ENCODE measurements at regions of chr15 and their contacts with region 1.

Region 1: DNA sequence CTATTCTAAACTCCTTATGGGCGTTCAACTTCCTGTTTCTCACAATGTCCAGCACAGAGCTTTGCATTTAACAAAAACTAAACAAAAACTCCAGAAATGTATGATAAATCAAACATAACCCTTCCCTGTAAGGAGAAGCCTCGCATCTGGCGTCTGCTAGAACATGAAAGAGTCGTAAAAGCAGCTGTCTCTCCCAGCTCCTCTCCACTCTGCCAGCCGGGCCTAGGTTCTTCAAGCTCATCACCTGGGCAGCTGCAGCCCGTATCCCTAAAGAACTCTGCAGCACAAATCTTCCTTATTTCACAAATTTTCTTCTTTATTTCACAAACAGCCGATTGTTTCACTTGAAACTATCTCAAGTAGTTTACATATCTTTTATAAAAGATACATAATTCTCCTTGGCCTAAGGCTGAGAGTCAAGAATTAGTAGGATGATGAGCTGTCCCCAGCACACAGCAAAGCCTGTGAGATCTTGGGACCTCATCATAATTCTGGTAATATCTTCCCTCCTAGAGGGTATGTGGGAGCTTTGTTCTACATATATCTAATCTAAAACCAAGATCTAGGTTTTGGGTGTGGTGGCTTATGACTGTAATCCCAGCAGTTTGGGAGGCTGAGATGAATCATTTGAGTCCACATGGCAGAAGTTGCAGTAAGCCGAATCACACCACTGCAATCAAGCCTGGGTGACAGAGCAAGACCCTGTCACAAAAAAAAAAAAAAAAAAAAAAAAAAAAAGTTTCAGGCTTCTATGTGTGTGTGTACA is 35.3 kb downstream of the ANXA2 start:
- DNase-seq: no peak
- ATAC-seq: no peak
- H3K4me3 ChIP-seq: no peak overlapping the region
- H3K4me3 Mint-ChIP-seq: no peak overlapping the region
- H3K27ac ChIP-seq: no peak overlapping the region
- H3K27ac Mint-ChIP-seq: peak overlapping the region; percentile 22
- H3K4me1 ChIP-seq: no peaks in the 10 kb centered on the region
- H3K4me1 Mint-ChIP-seq: no peaks in the 10 kb centered on the region
- H3K27me3 ChIP-seq: no peaks in the 10 kb centered on the region
- H3K27me3 Mint-ChIP-seq: no peaks in the 10 kb centered on the region
- CTCF ChIP-seq: no peak

Region 2: GRCh38 chr15:60444289-60444912 is 81.9 kb after region 1 on chr15:
- CTCF ChIA-PET with region 1: interaction called, 32 read pairs
- POLR2A ChIA-PET with region 1: no interaction called
- intact Hi-C with region 1: loop called (anchors 1 kb)
- DNase-seq: no peak
- ATAC-seq: no peak
- H3K4me3 ChIP-seq: no peak overlapping the region
- H3K4me3 Mint-ChIP-seq: no peak overlapping the region
- H3K27ac ChIP-seq: no peak overlapping the region
- H3K27ac Mint-ChIP-seq: no peak overlapping the region
- H3K4me1 ChIP-seq: no peaks in the 10 kb centered on the region
- H3K4me1 Mint-ChIP-seq: no peaks in the 10 kb centered on the region
- H3K27me3 ChIP-seq: no peaks in the 10 kb centered on the region
- H3K27me3 Mint-ChIP-seq: no peaks in the 10 kb centered on the region
- CTCF ChIP-seq: peak; percentile 30